ENCODE measurements at regions of chr3 and their contacts with region 1.

Region 1: GRCh38 chr3:25719321-25719720 is 54.6 kb upstream of the TOP2B start:
- DNase-seq: no peak
- ATAC-seq: no peak
- H3K4me3 ChIP-seq: no peak overlapping the region
- H3K4me3 Mint-ChIP-seq: no peak overlapping the region
- H3K27ac ChIP-seq: no peak overlapping the region
- H3K27ac Mint-ChIP-seq: no peak overlapping the region
- H3K4me1 ChIP-seq: no peaks in the 10 kb centered on the region
- H3K4me1 Mint-ChIP-seq: no peaks in the 10 kb centered on the region
- H3K27me3 ChIP-seq: no peaks in the 10 kb centered on the region
- H3K27me3 Mint-ChIP-seq: no peaks in the 10 kb centered on the region
- CTCF ChIP-seq: no peak

Region 2: GRCh38 chr3:25674670-25675069 is 44.7 kb before region 1 on chr3:
- CTCF ChIA-PET with region 1: no interaction called
- POLR2A ChIA-PET with region 1: no interaction called
- intact Hi-C with region 1: loop called in 1 of 2 experiments (anchors 5 kb)
- DNase-seq: no peak
- ATAC-seq: no peak
- H3K4me3 ChIP-seq: no peak overlapping the region
- H3K4me3 Mint-ChIP-seq: no peak overlapping the region
- H3K27ac ChIP-seq: no peak overlapping the region
- H3K27ac Mint-ChIP-seq: no peak overlapping the region
- H3K4me1 ChIP-seq: no peaks in the 10 kb centered on the region
- H3K4me1 Mint-ChIP-seq: no peaks in the 10 kb centered on the region
- H3K27me3 ChIP-seq: peaks cover 0 to 3% of the 10 kb centered on the region in 2 experiments
- H3K27me3 Mint-ChIP-seq: peaks cover 6% of the 10 kb centered on the region
- CTCF ChIP-seq: no peak

Measured in CD4-positive, alpha-beta T cell (primary cell).